ENCODE measurements at regions of chr1 and their contacts with region 1.

Region 1: GRCh38 chr1:200979574-200980451 is 43.7 kb downstream of the KIF21B start:
- DNase-seq: peak; percentile 81
- H3K4me3 Mint-ChIP-seq: no peak overlapping the region
- H3K27ac Mint-ChIP-seq: peak overlapping the region; percentile 25
- H3K4me1 Mint-ChIP-seq: no peaks in the 10 kb centered on the region
- H3K27me3 Mint-ChIP-seq: no peaks in the 10 kb centered on the region

Region 2: GRCh38 chr1:200992382-200993048 is 12.7 kb after region 1 on chr1:
- CTCF ChIA-PET with region 1: interaction called, 52 read pairs
- POLR2A ChIA-PET with region 1: no interaction called
- intact Hi-C with region 1: no loop called
- DNase-seq: no peak
- H3K4me3 Mint-ChIP-seq: no peak overlapping the region
- H3K27ac Mint-ChIP-seq: no peak overlapping the region
- H3K4me1 Mint-ChIP-seq: no peaks in the 10 kb centered on the region
- H3K27me3 Mint-ChIP-seq: no peaks in the 10 kb centered on the region

Region 3: DNA sequence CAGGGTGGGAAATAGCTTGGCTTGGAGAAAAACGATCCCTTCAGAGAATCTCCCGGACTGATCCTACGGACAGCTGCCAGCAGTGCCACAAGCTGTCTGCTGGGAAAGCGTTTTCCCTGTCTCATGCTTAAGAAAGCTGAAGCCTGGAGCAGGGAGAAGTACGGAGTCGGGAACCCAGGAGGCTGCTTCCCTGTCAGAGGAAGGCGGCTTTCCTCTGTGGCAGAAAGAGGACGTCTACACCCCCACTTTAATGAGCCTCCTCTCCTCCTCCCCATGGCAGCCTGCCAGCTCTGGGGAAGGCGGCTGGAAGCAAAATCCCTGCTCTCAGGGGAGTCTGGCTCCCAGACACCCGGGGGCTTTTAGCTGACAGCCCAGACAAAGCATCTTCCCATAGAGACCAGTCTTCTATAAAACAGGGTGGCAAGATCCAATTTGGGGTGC is 36.4 kb after region 1 on chr1:
- CTCF ChIA-PET with region 1: interaction called, 96 read pairs
- POLR2A ChIA-PET with region 1: interaction called, 3 read pairs
- intact Hi-C with region 1: no loop called
- DNase-seq: no peak
- H3K4me3 Mint-ChIP-seq: no peak overlapping the region
- H3K27ac Mint-ChIP-seq: peak overlapping the region; percentile 87
- H3K4me1 Mint-ChIP-seq: peaks cover 94% of the 10 kb centered on the region
- H3K27me3 Mint-ChIP-seq: no peaks in the 10 kb centered on the region

Region 4: DNA sequence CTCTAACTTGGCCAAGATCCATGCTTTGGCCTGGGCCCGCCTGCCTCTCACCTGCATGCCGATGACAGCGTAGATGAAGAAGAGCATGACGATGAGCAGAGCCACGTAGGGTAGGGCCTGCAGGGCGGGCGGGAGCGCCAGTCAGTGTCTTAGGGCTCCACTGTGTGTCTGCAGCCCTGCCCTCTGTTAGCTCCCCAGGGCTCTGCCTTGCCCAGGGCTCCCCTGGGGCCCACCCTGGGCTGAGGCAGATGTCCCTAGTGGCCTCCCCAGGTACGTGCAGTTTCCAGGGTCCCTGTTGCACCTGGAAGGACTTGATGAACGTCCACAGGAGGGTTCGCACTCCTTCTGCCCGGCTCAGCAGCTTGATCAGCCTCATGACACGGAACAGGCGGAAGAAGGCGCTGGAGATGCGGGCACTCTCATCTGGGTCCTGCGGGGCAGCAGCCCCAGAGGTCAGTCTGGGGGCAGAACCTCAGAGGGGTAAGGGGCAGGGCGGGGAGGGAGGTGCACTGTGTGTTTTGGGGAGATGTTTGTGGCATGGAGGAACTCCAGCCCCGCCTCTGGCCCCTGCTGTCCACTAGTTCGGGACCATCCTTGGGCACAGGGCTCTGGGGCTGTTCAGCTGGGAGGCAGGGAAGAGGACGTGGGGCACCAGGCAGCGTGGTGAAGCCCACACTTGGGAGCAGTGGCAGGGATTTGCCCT is 73.5 kb after region 1 on chr1:
- CTCF ChIA-PET with region 1: interaction called, 25 read pairs
- POLR2A ChIA-PET with region 1: interaction called, 4 read pairs
- intact Hi-C with region 1: no loop called
- DNase-seq: no peak
- H3K4me3 Mint-ChIP-seq: no peak overlapping the region
- H3K27ac Mint-ChIP-seq: no peak overlapping the region
- H3K4me1 Mint-ChIP-seq: peaks cover 19% of the 10 kb centered on the region
- H3K27me3 Mint-ChIP-seq: peaks cover 8% of the 10 kb centered on the region

Measured in activated CD4-positive, alpha-beta memory T cell treated with anti-CD3 and anti-CD28 coated beads for 36 hours (primary cell).